CD4-positive, alpha-beta memory T cell (primary cell): ENCODE measurements at regions of chr7 and their contacts with region 1.

Region 1: GRCh38 chr7:158847451-158847866 is 8.9 kb upstream of the DYNC2I1 start:
- DNase-seq: peak in 1 of 5 donors; percentile 46
- H3K4me3 ChIP-seq: peak overlapping the region in 1 of 2 donors; percentile 51
- H3K4me3 Mint-ChIP-seq: peak overlapping the region; percentile 78 to 97 (median 86)
- H3K27ac ChIP-seq: peak overlapping the region; percentile 31
- H3K27ac Mint-ChIP-seq: peak overlapping the region; percentile 68 to 99 (median 98)
- H3K4me1 ChIP-seq: peaks cover 15% of the 10 kb centered on the region
- H3K4me1 Mint-ChIP-seq: peaks cover 19 to 39% (median 26%) of the 10 kb centered on the region in 4 donors
- H3K27me3 ChIP-seq: no peaks in the 10 kb centered on the region
- H3K27me3 Mint-ChIP-seq: no peaks in the 10 kb centered on the region

Region 2: GRCh38 chr7:158863611-158864506 is 16.4 kb after region 1 on chr7:
- CTCF ChIA-PET with region 1: interaction called, 5 read pairs
- POLR2A ChIA-PET with region 1: interaction called, 15 read pairs
- intact Hi-C with region 1: no loop called
- DNase-seq: peak; percentile 21 to 49 (median 28)
- H3K4me3 ChIP-seq: peak overlapping the region; percentile 17 to 50
- H3K4me3 Mint-ChIP-seq: peak overlapping the region; percentile 86 to 98 (median 93)
- H3K27ac ChIP-seq: peak overlapping the region; percentile 55
- H3K27ac Mint-ChIP-seq: peak overlapping the region; percentile 60 to 98 (median 95)
- H3K4me1 ChIP-seq: peaks cover 17% of the 10 kb centered on the region
- H3K4me1 Mint-ChIP-seq: peaks cover 19 to 37% (median 33%) of the 10 kb centered on the region in 4 donors
- H3K27me3 ChIP-seq: no peaks in the 10 kb centered on the region
- H3K27me3 Mint-ChIP-seq: no peaks in the 10 kb centered on the region